Panc1 (cell line): ENCODE measurements at regions of chr17 and their contacts with region 1.

Region 1: GRCh38 chr17:27805520-27806146 is 5.3 kb upstream of the NOS2 start:
- DNase-seq: peak; percentile 58
- ATAC-seq: peak; percentile 97
- H3K4me3 ChIP-seq: peak overlapping the region; percentile 22 to 55
- H3K27ac ChIP-seq: peak overlapping the region; percentile 61
- H3K4me1 ChIP-seq: peaks cover 6% of the 10 kb centered on the region
- H3K27me3 ChIP-seq: no peaks in the 10 kb centered on the region; the same call in 1 of the 2 replicates
- CTCF ChIP-seq: peak; percentile 88

Region 2: GRCh38 chr17:27519550-27519949 is 286.1 kb before region 1 on chr17:
- CTCF ChIA-PET with region 1: no interaction called
- POLR2A ChIA-PET with region 1: no interaction called
- in situ Hi-C with region 1: no loop called
- intact Hi-C with region 1: no loop called
- DNase-seq: no peak
- ATAC-seq: no peak
- H3K4me3 ChIP-seq: no peak overlapping the region
- H3K27ac ChIP-seq: no peak overlapping the region
- H3K4me1 ChIP-seq: no peaks in the 10 kb centered on the region
- H3K27me3 ChIP-seq: no peaks in the 10 kb centered on the region
- CTCF ChIP-seq: no peak

Region 3: GRCh38 chr17:27782791-27783206 is 22.8 kb before region 1 on chr17:
- CTCF ChIA-PET with region 1: interaction called, 10 read pairs
- POLR2A ChIA-PET with region 1: no interaction called
- in situ Hi-C with region 1: no loop called
- intact Hi-C with region 1: no loop called
- DNase-seq: no peak
- ATAC-seq: no peak
- H3K4me3 ChIP-seq: no peak overlapping the region
- H3K27ac ChIP-seq: no peak overlapping the region
- H3K4me1 ChIP-seq: no peaks in the 10 kb centered on the region
- H3K27me3 ChIP-seq: no peaks in the 10 kb centered on the region
- CTCF ChIP-seq: no peak

Region 4: DNA sequence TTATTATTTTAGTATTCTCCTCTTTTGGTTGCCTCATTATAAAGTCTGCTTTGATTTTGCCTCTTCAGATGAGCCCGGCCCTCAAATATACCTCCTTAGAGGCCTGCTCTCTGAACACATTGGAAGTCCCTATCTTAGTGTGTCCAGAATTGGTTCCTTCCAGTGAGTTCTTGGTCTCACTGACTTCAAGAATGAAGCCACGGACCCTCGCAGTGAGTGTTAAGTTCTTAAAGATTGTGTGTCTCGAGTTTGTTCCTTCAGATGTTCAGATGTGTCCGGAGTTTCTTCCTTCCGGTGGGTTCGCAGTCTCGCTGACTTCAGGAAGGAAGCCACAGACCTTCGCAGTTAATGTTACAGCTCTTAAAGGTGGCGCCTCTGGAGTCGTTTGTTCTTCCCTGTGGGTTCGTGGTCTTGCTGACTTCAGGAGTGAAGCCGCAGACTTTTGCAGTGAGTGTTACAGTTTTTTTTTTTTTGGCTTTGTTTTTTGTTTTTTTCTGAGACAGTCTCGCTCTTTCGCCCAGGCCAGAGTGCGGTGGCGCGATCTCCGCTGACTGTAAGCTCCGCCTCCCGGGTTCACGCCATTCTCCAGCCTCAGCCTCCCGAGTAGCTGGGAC is 40.5 kb after region 1 on chr17:
- CTCF ChIA-PET with region 1: no interaction called
- POLR2A ChIA-PET with region 1: no interaction called
- in situ Hi-C with region 1: no loop called
- intact Hi-C with region 1: loop called (anchors 5 kb)
- DNase-seq: no peak
- ATAC-seq: no peak
- H3K4me3 ChIP-seq: no peak overlapping the region
- H3K27ac ChIP-seq: no peak overlapping the region
- H3K4me1 ChIP-seq: no peaks in the 10 kb centered on the region
- H3K27me3 ChIP-seq: peaks cover 8% of the 10 kb centered on the region
- CTCF ChIP-seq: no peak

Region 5: DNA sequence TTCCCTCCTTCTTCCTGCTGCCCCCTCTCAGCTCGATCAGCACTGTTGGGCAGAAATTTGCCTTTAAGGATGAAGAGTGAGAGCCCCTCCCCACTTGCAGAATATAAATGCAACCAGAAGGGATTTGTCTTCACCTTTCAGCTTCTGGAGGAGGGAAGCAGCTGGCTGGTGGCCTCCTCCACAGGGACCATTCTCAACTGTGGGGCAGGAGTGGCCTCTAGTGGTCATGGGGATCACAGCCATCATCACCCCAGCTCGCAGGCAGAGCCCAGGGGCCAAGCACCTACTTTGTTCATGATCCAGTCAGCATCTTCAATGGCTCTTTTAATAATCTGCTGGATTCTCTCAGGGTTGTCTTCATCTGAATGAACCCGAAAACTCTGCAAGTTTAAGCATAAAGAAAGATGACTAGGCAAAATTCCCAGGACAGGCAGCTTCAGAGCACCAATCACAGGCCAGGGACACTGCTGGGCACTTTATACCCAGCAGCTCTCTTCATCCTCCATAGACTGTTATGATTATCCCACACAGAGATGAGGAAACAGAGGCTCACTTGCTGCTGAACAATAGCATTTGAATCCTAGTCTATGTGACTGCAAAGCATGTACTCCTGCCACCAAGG is 74.5 kb after region 1 on chr17:
- CTCF ChIA-PET with region 1: interaction called, 113 read pairs
- POLR2A ChIA-PET with region 1: no interaction called
- in situ Hi-C with region 1: no loop called
- intact Hi-C with region 1: loop called (anchors 2 kb)
- DNase-seq: peak; percentile 38
- ATAC-seq: peak; percentile 98
- H3K4me3 ChIP-seq: no peak overlapping the region
- H3K27ac ChIP-seq: no peak overlapping the region
- H3K4me1 ChIP-seq: no peaks in the 10 kb centered on the region
- H3K27me3 ChIP-seq: no peaks in the 10 kb centered on the region
- CTCF ChIP-seq: peak; percentile 89

Region 6: GRCh38 chr17:27892866-27893769 is 87.5 kb after region 1 on chr17 and contains the start of gene LYRM9:
- CTCF ChIA-PET with region 1: interaction called, 27 read pairs
- POLR2A ChIA-PET with region 1: no interaction called
- in situ Hi-C with region 1: no loop called
- intact Hi-C with region 1: no loop called
- DNase-seq: peak; percentile 28
- ATAC-seq: peak; percentile 100
- H3K4me3 ChIP-seq: peak within 1 kb of the TSS; percentile 57 to 69
- H3K27ac ChIP-seq: peak within 1 kb of the TSS; percentile 74
- H3K4me1 ChIP-seq: peaks cover 14% of the 10 kb centered on the region; the same call in 1 of the 2 replicates
- H3K27me3 ChIP-seq: peaks cover 13% of the 10 kb centered on the region
- CTCF ChIP-seq: peak; percentile 99
- total RNA-seq, gene LYRM9: 1.6 TPM

Region 7: DNA sequence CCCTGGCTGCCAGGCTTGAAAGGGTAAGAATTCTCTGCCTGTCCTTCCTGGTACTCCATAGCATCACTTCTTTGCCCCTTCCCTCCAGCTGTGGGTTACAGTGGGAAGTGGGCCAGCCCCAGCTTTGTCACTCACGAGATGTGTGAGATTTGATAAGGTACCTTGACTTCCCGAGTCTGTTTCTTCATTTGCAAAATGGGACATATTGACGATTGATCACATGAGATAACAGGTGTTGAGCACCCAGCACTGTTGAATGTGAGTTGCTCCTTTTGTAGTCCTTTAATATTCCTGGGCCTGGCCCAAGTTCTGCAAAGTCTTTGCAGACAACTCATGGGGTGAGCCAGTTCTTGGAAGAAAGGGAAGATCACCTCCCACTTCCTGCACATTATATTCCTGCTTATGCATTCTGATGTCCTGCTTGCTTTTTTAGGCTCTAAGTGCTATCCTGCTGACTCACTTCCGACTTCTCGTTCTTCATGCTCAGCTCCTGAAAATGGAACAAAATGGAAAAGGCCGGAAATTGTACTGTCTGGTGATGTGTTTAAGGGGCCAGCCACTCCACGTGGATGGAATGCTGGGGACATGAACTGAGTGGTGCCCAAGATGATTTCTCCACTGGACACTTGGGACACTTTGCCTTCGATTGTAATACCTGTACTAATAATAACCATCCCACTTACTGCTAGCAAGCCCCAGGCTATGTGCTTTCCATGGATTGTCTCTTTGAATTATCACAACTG is 228.5 kb after region 1 on chr17:
- CTCF ChIA-PET with region 1: interaction called, 3 read pairs
- POLR2A ChIA-PET with region 1: no interaction called
- in situ Hi-C with region 1: no loop called
- intact Hi-C with region 1: loop called (anchors 5 kb)
- DNase-seq: no peak
- ATAC-seq: peak; percentile 56
- H3K4me3 ChIP-seq: no peak overlapping the region
- H3K27ac ChIP-seq: no peak overlapping the region
- H3K4me1 ChIP-seq: no peaks in the 10 kb centered on the region
- H3K27me3 ChIP-seq: no peaks in the 10 kb centered on the region; the same call in 1 of the 2 replicates
- CTCF ChIP-seq: no peak